A673 (cell line): ENCODE measurements at regions of chr2 and their contacts with region 1.

Region 1: GRCh38 chr2:168961450-168962229 is 60.5 kb downstream of the G6PC2 start:
- DNase-seq: peak; percentile 79
- H3K4me3 ChIP-seq: no peak overlapping the region
- H3K27ac ChIP-seq: no peak overlapping the region
- H3K4me1 ChIP-seq: no peaks in the 10 kb centered on the region
- H3K27me3 ChIP-seq: no peaks in the 10 kb centered on the region
- CTCF ChIP-seq: peak; percentile 85

Region 2: GRCh38 chr2:169131587-169132512 is 170.2 kb after region 1 on chr2:
- CTCF ChIA-PET with region 1: no interaction called
- POLR2A ChIA-PET with region 1: no interaction called
- intact Hi-C with region 1: loop called (anchors 2 kb)
- DNase-seq: peak; percentile 72
- H3K4me3 ChIP-seq: no peak overlapping the region
- H3K27ac ChIP-seq: no peak overlapping the region
- H3K4me1 ChIP-seq: no peaks in the 10 kb centered on the region
- H3K27me3 ChIP-seq: no peaks in the 10 kb centered on the region
- CTCF ChIP-seq: peak; percentile 80

Region 3: GRCh38 chr2:169141713-169142352 is 180.2 kb after region 1 on chr2:
- CTCF ChIA-PET with region 1: no interaction called
- POLR2A ChIA-PET with region 1: no interaction called
- intact Hi-C with region 1: loop called (anchors 2 kb)
- DNase-seq: peak; percentile 72
- H3K4me3 ChIP-seq: no peak overlapping the region
- H3K27ac ChIP-seq: no peak overlapping the region
- H3K4me1 ChIP-seq: no peaks in the 10 kb centered on the region
- H3K27me3 ChIP-seq: no peaks in the 10 kb centered on the region
- CTCF ChIP-seq: peak; percentile 83

Region 4: DNA sequence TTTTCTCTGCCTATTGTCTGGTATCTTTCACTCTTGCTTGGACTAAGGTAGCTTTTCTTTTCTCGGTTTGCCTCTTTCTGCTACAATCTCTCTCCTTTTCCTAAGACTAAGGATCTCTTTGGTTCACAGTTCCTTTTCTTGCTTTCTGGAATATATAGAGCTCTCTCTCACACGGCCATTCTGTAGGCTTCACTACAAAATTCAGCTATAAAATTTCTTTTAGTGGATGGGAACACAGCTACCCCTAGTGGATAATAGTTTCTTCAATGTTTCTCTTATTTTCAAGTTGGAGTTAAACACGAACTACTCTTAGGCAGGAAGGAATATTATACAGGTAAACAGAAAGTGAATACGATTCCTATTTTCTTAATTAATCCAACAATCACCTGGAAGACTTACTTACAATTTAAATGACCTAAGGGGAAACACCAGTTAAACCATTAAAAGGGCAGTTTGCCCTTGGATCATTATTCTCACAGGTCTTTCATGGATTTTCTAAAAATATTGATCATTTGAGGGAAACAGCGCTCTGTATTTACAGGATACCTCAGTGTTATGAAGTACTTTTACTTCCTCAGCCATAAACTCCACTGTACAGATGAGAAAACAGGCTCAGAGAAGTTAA is 260.2 kb after region 1 on chr2:
- CTCF ChIA-PET with region 1: interaction called, 3 read pairs
- POLR2A ChIA-PET with region 1: no interaction called
- intact Hi-C with region 1: loop called (anchors 5 kb)
- DNase-seq: peak; percentile 38
- H3K4me3 ChIP-seq: no peak overlapping the region
- H3K27ac ChIP-seq: no peak overlapping the region
- H3K4me1 ChIP-seq: no peaks in the 10 kb centered on the region
- H3K27me3 ChIP-seq: no peaks in the 10 kb centered on the region
- CTCF ChIP-seq: peak; percentile 59